ENCODE measurements at regions of chr16 and their contacts with region 1.

Region 1: DNA sequence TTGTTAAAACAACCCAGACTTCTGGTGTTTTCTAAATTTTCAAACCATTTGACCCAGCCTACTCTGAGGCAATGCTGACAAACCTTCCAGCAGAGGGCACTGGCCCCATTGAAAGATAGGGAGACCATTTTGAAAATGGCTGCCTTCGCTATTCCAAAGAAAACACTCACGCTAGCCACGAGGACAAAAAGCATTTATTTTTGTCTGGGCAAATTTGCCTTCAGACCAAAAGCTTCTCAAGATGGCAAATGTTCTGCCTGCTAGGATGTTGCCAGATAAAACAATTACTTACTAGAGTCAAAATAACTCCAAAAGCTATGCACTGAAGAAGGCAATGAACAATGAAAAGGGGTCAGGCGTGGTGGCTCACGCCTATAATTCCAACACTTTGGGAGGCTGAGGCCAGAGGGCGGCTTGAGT is 296.7 kb upstream of the IRX5 start:
- DNase-seq: peak in 1 of 2 donors; percentile 84
- H3K4me3 ChIP-seq: no peak overlapping the region
- H3K27ac ChIP-seq: peak overlapping the region; percentile 22 to 42
- H3K4me1 ChIP-seq: peaks cover 0 to 8% of the 10 kb centered on the region in 2 donors
- H3K27me3 ChIP-seq: no peaks in the 10 kb centered on the region
- CTCF ChIP-seq: peak; percentile 47 to 83 (median 81)

Region 2: DNA sequence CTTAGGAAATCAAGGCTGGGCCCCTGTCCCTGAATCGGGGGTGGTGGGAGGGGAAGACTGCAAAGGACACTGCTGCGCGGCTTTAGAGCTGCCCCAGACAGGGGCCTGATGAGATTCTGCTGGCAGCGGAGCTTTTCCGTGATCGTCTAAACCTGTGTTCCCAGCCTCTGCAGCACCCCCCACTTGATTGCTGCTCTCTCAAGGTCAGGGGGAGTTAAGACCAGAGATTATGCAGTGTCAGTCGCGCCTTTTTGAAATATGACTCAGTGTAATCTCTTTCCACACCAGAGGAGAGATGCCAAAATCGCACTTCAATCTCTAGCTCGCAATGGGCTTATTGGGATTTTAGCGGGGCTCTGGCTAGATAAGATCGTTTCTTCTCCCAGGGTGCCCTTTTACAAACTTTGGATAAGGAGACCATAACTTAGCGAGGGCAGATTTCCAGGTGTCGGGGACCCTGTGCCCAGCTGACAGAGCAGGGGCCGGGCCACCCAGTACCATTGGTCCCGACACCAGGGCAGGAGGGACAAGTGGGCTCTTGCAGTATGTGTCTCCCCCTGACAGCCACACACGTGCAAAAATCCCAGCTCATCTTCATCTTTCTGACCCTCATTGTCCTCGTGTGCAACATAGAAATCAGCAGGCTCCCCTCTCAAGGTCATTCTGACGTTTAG is 434.3 kb before region 1 on chr16:
- intact Hi-C with region 1: loop called (anchors 5 kb)
- DNase-seq: no peak
- H3K4me3 ChIP-seq: no peak overlapping the region
- H3K27ac ChIP-seq: no peak overlapping the region
- H3K4me1 ChIP-seq: no peaks in the 10 kb centered on the region
- H3K27me3 ChIP-seq: no peaks in the 10 kb centered on the region
- CTCF ChIP-seq: no peak

Region 3: DNA sequence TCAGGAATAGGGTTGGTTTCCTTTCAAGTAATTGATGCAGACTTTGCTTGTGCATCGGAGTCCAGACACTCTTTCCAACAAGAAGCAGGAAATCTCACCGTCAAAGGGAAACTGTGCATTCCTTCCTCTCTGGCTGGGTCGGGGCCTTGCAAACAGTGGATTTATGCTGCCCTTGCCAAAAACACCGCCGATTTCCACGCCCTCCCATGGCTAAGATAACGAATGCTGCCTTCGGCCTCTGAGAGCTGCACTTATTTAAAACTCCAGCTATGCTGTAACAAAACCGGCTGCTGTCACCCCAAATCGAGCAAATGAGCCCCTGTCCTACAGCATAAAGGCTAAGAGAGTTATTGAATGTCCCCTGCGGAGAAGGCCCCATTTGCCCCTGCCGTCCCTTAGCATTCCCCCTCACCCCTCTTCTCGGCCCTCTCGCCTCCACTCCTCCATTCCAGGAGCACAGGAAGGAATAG is 21.2 kb after region 1 on chr16:
- intact Hi-C with region 1: loop called (anchors 2 kb)
- DNase-seq: no peak
- H3K4me3 ChIP-seq: peak overlapping the region; percentile 31 to 42
- H3K27ac ChIP-seq: peak overlapping the region; percentile 64 to 74
- H3K4me1 ChIP-seq: peaks cover 6 to 27% of the 10 kb centered on the region in 2 donors
- H3K27me3 ChIP-seq: no peaks in the 10 kb centered on the region
- CTCF ChIP-seq: no peak

Region 4: DNA sequence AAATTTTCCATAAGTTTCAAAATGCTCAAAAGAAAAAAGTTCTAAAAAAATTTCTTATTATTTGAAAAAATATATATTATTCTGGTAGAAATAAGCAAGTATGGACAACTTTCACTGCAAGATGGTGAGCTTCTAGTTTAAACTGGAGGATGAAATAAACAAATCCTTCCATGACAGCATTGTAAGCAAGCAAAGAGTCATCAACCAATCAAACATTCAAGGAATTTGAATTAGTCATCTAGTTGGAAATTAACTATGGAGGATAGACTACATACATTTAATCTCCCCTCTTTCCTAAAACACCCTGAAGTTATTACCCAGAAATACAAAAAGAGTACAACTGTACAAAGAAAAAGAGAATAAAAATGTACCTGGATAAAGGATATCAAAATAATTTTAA is 245.7 kb after region 1 on chr16:
- intact Hi-C with region 1: no loop called
- DNase-seq: no peak
- H3K4me3 ChIP-seq: no peak overlapping the region
- H3K27ac ChIP-seq: no peak overlapping the region
- H3K4me1 ChIP-seq: no peaks in the 10 kb centered on the region
- H3K27me3 ChIP-seq: no peaks in the 10 kb centered on the region
- CTCF ChIP-seq: no peak

Region 5: GRCh38 chr16:54929090-54930004 is 295.4 kb after region 1 on chr16:
- intact Hi-C with region 1: loop called (anchors 1 kb)
- DNase-seq: peak; percentile 98 to 100
- H3K4me3 ChIP-seq: peak overlapping the region; percentile 82 to 94
- H3K27ac ChIP-seq: peak overlapping the region; percentile 91 to 99
- H3K4me1 ChIP-seq: peaks cover 7 to 13% of the 10 kb centered on the region in 2 donors
- H3K27me3 ChIP-seq: no peaks in the 10 kb centered on the region
- CTCF ChIP-seq: peak in 2 of 3 experiments; percentile 17 to 34